Motor neuron (in vitro differentiated cells): ENCODE measurements at regions of chr5 and their contacts with region 1.

Region 1: DNA sequence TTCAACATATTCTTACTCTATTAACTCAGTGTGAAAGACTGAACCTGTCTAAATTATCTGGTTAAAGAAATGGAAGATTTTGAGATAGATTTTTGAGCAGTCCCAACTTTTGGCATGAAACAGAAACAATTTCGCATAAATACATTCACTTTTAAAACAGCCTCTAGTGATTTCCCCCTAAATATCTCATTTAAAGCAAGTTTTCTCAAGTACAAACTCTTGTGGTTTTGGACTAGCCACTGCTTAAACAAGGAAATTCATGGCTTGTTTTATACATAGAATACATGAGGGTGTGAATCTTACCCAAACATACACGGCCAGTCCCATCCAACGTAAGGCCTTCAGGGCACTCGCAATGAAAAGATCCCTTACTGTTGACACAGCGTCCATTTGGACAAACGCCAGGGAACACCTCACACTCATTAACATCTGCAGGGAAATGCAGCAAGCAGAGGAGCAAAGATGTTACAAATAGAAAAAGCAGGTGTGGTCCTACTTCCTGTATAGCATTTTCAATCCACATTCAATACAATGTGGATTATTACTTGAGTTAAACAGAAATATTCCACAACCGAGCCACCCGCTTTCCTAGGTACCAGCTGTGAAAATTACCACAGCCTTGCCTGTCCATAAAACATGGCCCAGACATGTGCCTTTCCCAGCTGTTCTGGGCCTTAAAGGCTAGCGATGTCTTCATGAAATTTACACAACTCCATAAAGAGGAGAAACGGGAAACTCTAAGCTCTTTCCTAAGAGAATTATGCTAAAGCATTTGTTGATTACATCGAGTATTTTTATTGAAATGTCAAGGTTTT is 188.8 kb downstream of the FBN2 start:
- ATAC-seq: peak in 4 of 8 experiments; percentile 74 to 96 (median 96)
- H3K4me3 ChIP-seq: no peak overlapping the region
- H3K27ac ChIP-seq: no peak overlapping the region
- H3K4me1 ChIP-seq: no peaks in the 10 kb centered on the region

Region 2: DNA sequence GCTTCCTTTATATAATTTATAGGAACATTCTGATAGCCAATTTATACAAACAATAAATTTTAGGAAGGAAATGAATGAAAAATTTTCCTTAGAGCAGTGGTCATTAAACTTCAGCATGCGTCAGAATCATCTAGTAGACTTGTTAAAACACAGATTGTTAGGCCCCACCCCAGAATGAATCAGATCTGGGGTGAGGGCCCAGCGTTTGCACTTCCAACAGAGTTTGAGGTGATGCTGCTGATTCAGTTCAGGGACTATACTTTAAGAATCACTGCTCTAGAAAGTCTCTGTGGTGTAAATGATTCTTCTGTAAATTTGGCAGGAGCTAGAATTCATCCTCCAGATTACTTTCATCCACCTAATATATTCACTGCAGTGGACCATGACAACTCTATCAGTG is 185.3 kb before region 1 on chr5:
- in situ Hi-C with region 1: no loop called
- ATAC-seq: peak in 2 of 8 experiments; percentile 85 to 94
- H3K4me3 ChIP-seq: no peak overlapping the region
- H3K27ac ChIP-seq: no peak overlapping the region
- H3K4me1 ChIP-seq: no peaks in the 10 kb centered on the region

Region 3: GRCh38 chr5:128228008-128228407 is 121.2 kb before region 1 on chr5:
- in situ Hi-C with region 1: loop called in 1 of 9 experiments (anchors 25 kb)
- ATAC-seq: peak in 3 of 8 experiments; percentile 52 to 98 (median 97)
- H3K4me3 ChIP-seq: no peak overlapping the region
- H3K27ac ChIP-seq: no peak overlapping the region
- H3K4me1 ChIP-seq: peaks cover 0 to 7% of the 10 kb centered on the region in 2 donors